CD4-positive, alpha-beta T cell (primary cell): ENCODE measurements at regions of chr21 and their contacts with region 1.

Region 1: GRCh38 chr21:46228345-46229051 is at the start of gene LSS:
- DNase-seq: peak; percentile 94 to 99 (median 98)
- ATAC-seq: peak; percentile 97
- H3K4me3 ChIP-seq: peak within 1 kb of the TSS; percentile 87
- H3K4me3 Mint-ChIP-seq: peak within 1 kb of the TSS; percentile 98
- H3K27ac ChIP-seq: peak within 1 kb of the TSS in 1 of 2 donors; percentile 43
- H3K27ac Mint-ChIP-seq: peak within 1 kb of the TSS; percentile 75
- H3K4me1 ChIP-seq: peaks cover 31% of the 10 kb centered on the region
- H3K4me1 Mint-ChIP-seq: peaks cover 54% of the 10 kb centered on the region
- H3K27me3 ChIP-seq: no peaks in the 10 kb centered on the region
- H3K27me3 Mint-ChIP-seq: no peaks in the 10 kb centered on the region
- CTCF ChIP-seq: no peak
- total RNA-seq, gene LSS: 30.4 TPM

Region 2: DNA sequence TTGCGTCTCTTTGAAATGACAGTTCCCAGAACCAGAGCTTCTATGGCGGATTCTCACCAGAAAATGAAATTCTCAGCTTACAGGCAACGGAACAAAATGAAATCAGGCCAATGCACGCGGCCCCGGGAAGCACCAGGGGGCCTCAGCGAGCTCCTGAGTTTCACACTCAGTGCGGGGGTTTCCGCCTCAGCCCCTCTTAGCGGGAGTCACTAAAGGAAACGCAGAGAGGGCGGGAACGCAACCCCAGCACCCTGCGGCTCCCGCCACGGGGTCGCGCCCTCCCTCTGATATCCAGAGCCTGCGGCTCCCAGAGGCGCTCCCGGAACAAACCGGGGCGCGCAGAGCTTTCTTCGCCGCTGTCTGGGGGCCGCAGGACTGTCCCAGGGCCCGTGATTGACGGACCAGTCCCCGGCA is 254.8 kb before region 1 on chr21:
- CTCF ChIA-PET with region 1: no interaction called
- POLR2A ChIA-PET with region 1: no interaction called
- intact Hi-C with region 1: loop called (anchors 5 kb)
- DNase-seq: peak; percentile 59 to 89 (median 72)
- ATAC-seq: peak; percentile 85
- H3K4me3 ChIP-seq: peak overlapping the region; percentile 70
- H3K4me3 Mint-ChIP-seq: peak overlapping the region; percentile 93
- H3K27ac ChIP-seq: no peak overlapping the region
- H3K27ac Mint-ChIP-seq: peak overlapping the region; percentile 30
- H3K4me1 ChIP-seq: peaks cover 49% of the 10 kb centered on the region
- H3K4me1 Mint-ChIP-seq: peaks cover 14% of the 10 kb centered on the region
- H3K27me3 ChIP-seq: peaks cover 48 to 51% of the 10 kb centered on the region in 2 experiments
- H3K27me3 Mint-ChIP-seq: peaks cover 30% of the 10 kb centered on the region
- CTCF ChIP-seq: peak; percentile 78

Region 3: DNA sequence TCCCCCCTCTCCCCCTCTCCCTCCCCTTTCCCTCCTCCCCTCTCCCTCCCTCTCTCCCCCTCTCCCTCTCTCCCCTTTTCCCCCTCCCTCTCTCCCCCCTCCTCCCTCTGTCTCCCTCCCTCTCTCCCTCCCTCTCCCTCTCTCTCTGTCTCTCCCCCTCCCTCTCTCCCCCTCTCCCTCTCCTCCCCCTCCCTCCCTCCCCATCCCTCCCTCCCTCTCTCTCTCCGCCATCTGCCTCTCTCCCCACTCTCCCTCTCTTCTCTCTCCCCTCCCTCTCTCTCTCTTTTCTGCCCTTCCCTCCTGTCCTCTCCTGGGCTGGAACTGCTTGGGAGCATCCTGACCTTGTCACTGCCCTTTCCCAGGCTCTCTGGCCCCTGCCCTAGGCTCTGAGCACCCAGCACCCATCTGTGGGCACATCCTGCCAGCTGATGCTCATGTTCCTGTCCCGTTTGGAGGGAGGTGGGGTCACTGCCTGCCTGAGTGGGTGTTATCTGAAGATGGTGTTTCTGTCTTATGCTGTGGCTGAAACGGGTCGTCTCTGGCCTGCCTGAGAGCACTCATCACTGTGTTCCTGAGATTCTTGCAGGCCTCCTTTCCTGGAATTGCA is 83.9 kb before region 1 on chr21:
- CTCF ChIA-PET with region 1: interaction called, 10 read pairs
- POLR2A ChIA-PET with region 1: no interaction called
- intact Hi-C with region 1: loop called in 1 of 2 experiments (anchors 5 kb)
- DNase-seq: no peak
- ATAC-seq: no peak
- H3K4me3 ChIP-seq: no peak overlapping the region
- H3K4me3 Mint-ChIP-seq: no peak overlapping the region
- H3K27ac ChIP-seq: no peak overlapping the region
- H3K27ac Mint-ChIP-seq: no peak overlapping the region
- H3K4me1 ChIP-seq: peaks cover 12% of the 10 kb centered on the region
- H3K4me1 Mint-ChIP-seq: peaks cover 8% of the 10 kb centered on the region
- H3K27me3 ChIP-seq: no peaks in the 10 kb centered on the region
- H3K27me3 Mint-ChIP-seq: no peaks in the 10 kb centered on the region
- CTCF ChIP-seq: no peak

Region 4: GRCh38 chr21:46171996-46172862 is 56.3 kb before region 1 on chr21:
- CTCF ChIA-PET with region 1: no interaction called
- POLR2A ChIA-PET with region 1: no interaction called
- intact Hi-C with region 1: no loop called
- DNase-seq: peak in 1 of 14 experiments; percentile 16
- ATAC-seq: no peak
- H3K4me3 ChIP-seq: no peak overlapping the region
- H3K4me3 Mint-ChIP-seq: no peak overlapping the region
- H3K27ac ChIP-seq: no peak overlapping the region
- H3K27ac Mint-ChIP-seq: no peak overlapping the region
- H3K4me1 ChIP-seq: peaks cover 6% of the 10 kb centered on the region
- H3K4me1 Mint-ChIP-seq: peaks cover 6% of the 10 kb centered on the region
- H3K27me3 ChIP-seq: no peaks in the 10 kb centered on the region
- H3K27me3 Mint-ChIP-seq: no peaks in the 10 kb centered on the region
- CTCF ChIP-seq: no peak

Region 5: DNA sequence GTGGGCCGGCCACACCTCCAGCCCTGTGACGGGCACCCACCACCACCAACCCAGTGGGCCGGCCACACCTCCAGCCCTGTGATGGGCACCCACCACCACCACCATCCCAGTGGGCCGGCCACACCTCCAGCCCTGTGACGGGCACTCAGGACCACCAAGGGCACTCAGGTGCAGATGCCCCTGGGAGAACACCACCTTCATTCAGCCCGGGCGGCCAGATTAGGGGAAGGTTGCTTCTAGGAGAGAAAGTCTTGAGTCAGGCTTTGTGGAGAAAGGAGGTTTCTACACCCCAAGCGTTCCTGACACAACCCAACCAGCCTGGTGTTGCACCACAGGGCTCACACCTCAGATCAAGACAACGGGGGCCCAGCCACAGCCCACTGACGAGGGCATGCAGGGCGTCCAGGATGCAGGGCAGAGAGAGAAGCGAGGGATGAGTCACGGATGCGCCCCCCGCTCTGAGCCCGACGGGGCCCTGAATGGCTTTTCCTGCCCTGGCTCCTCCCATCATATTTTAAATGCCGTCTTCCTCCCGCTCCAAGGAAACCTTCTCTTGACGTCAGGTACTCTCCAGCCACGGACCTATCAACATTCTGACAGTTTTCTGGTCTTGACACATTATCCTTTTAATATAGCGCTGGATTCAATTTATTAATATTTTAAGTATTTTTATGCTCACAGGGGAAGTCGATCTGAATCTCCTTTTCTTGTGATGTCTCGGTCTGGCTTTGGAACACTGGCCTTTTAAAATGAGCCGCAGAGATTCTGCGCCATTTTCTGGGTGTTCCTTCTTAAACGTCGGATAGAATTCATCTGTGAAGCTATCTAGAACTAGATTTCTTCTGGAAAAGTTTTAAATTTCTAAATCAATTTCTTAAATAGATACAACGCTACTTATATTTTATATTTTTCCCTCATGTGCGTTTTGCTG is 43.6 kb before region 1 on chr21:
- CTCF ChIA-PET with region 1: no interaction called
- POLR2A ChIA-PET with region 1: no interaction called
- intact Hi-C with region 1: loop called in 1 of 2 experiments (anchors 1 kb)
- DNase-seq: peak; percentile 19 to 82 (median 53)
- ATAC-seq: peak; percentile 75
- H3K4me3 ChIP-seq: peak overlapping the region; percentile 64
- H3K4me3 Mint-ChIP-seq: peak overlapping the region; percentile 80
- H3K27ac ChIP-seq: peak overlapping the region; percentile 59 to 85
- H3K27ac Mint-ChIP-seq: peak overlapping the region; percentile 31
- H3K4me1 ChIP-seq: peaks cover 25% of the 10 kb centered on the region
- H3K4me1 Mint-ChIP-seq: peaks cover 11% of the 10 kb centered on the region
- H3K27me3 ChIP-seq: peaks cover 0 to 3% of the 10 kb centered on the region in 2 experiments
- H3K27me3 Mint-ChIP-seq: no peaks in the 10 kb centered on the region
- CTCF ChIP-seq: no peak

Region 6: DNA sequence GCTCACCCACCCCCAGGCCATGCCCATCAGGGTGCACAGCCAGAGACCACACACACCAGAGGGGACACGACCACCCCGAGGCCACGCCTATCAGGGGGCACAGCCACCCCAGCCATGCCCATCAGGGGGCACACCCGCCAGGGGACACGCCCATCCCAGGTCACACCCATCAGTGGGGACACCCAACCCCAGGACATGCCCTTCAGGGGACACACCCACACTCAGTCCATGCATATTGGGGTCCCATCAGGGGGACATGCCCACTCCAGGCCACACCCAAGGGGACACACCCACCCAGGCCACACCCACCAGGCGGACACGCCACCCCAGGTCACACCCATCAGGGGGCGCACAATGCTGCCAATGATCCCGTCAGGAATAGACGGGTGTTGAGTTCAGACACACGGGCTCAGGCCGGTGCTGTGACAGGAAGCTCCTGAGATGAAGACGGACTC is 36.2 kb after region 1 on chr21:
- CTCF ChIA-PET with region 1: no interaction called
- POLR2A ChIA-PET with region 1: no interaction called
- intact Hi-C with region 1: no loop called
- DNase-seq: no peak
- ATAC-seq: no peak
- H3K4me3 ChIP-seq: no peak overlapping the region
- H3K4me3 Mint-ChIP-seq: no peak overlapping the region
- H3K27ac ChIP-seq: no peak overlapping the region
- H3K27ac Mint-ChIP-seq: no peak overlapping the region
- H3K4me1 ChIP-seq: peaks cover 4% of the 10 kb centered on the region
- H3K4me1 Mint-ChIP-seq: no peaks in the 10 kb centered on the region
- H3K27me3 ChIP-seq: no peaks in the 10 kb centered on the region
- H3K27me3 Mint-ChIP-seq: no peaks in the 10 kb centered on the region
- CTCF ChIP-seq: no peak

Region 7: DNA sequence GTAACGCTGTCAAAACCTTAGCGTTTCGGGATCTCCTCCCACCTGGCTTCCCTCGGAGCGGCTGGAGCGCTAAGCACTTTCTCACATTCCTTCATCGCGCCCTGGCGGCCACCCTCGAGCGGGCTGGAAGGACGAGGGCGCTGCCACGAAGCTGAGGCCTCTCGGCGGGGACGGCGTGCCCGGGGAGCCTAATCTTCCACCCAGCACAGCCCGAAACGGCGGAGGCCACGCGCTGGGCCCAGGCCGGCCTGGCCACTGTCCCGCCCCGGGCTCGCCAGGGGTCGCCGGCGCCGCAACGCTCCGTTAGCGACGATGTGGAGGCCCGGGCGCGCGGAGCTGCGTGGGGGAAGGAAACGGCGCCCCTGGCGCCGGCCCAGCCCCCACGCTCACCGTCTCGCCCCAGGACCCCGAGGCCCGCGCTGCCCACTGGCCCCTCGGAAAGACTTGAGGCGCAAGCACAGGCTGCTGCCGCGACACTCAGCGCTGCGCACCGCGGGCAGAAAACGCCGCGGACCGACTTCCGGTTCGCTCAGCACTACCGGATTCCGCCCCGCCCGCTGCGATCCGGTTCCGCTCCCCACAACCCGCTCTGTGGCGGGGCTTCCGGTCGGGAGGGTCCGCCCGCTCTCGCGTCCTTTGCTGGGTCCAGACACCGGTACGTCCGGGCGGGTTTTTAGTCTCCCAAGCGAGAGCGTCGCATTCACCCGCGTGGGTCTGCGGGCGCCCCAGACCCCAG is 57.4 kb after region 1 on chr21 and contains the start of gene YBEY:
- CTCF ChIA-PET with region 1: no interaction called
- POLR2A ChIA-PET with region 1: interaction called, 3 read pairs
- intact Hi-C with region 1: loop called (anchors 1 to 10 kb)
- DNase-seq: peak; percentile 68 to 92 (median 82)
- ATAC-seq: peak; percentile 80
- H3K4me3 ChIP-seq: peak within 1 kb of the TSS; percentile 84
- H3K4me3 Mint-ChIP-seq: peak within 1 kb of the TSS; percentile 98
- H3K27ac ChIP-seq: peak within 1 kb of the TSS; percentile 72 to 84
- H3K27ac Mint-ChIP-seq: peak within 1 kb of the TSS; percentile 86
- H3K4me1 ChIP-seq: peaks cover 49% of the 10 kb centered on the region
- H3K4me1 Mint-ChIP-seq: peaks cover 54% of the 10 kb centered on the region
- H3K27me3 ChIP-seq: no peaks in the 10 kb centered on the region
- H3K27me3 Mint-ChIP-seq: no peaks in the 10 kb centered on the region
- CTCF ChIP-seq: peak; percentile 41
- total RNA-seq, gene YBEY: 10.6 to 14.8 TPM

Region 8: DNA sequence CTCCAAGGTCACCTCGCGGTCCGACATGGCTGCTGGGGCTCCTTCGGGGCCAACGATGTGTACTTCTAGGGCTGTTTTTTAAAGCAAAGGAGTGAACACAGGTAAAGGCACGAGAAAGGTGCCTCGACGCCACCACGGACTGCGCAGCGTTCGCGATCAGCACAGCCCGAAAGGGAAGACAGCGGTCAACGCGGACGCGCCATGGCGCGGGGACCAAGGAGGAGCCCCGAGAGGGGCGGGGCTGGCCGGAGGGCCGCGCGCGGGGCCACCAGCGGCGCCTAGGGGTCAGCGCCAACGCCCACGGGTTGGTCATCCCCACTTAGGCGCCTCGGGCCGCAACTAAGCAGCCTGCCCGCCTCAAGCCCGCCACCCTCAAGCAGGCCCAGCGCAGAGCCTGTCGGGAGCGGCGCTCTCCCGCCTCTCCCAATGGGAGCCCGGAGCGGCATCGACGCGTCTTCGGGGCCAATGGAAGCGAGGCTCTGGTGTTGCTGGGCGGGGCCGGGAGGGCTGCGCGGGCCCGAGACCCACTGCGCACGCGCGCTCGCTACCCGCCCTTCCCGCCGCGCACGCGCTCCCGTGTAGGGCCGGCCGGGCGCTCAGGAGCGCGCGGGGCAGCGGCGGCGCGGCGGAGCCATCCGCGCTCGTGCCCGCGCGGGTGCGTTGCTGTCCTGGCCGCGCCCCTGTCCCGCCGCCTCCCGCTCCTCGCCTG is 230.0 kb after region 1 on chr21 and contains the start of gene DIP2A:
- CTCF ChIA-PET with region 1: no interaction called
- POLR2A ChIA-PET with region 1: no interaction called
- intact Hi-C with region 1: loop called in 1 of 2 experiments (anchors 2 kb)
- DNase-seq: peak; percentile 85 to 99 (median 93)
- ATAC-seq: peak; percentile 97
- H3K4me3 ChIP-seq: peak within 1 kb of the TSS; percentile 89
- H3K4me3 Mint-ChIP-seq: peak within 1 kb of the TSS; percentile 94
- H3K27ac ChIP-seq: peak within 1 kb of the TSS; percentile 78 to 86
- H3K27ac Mint-ChIP-seq: peak within 1 kb of the TSS; percentile 93
- H3K4me1 ChIP-seq: peaks cover 35% of the 10 kb centered on the region
- H3K4me1 Mint-ChIP-seq: peaks cover 63% of the 10 kb centered on the region
- H3K27me3 ChIP-seq: no peaks in the 10 kb centered on the region
- H3K27me3 Mint-ChIP-seq: no peaks in the 10 kb centered on the region
- CTCF ChIP-seq: no peak
- total RNA-seq, gene DIP2A: 61.2 to 66.1 TPM